Endothelial cell of umbilical vein (primary cell): ENCODE measurements at regions of chr4 and their contacts with region 1.

Region 1: DNA sequence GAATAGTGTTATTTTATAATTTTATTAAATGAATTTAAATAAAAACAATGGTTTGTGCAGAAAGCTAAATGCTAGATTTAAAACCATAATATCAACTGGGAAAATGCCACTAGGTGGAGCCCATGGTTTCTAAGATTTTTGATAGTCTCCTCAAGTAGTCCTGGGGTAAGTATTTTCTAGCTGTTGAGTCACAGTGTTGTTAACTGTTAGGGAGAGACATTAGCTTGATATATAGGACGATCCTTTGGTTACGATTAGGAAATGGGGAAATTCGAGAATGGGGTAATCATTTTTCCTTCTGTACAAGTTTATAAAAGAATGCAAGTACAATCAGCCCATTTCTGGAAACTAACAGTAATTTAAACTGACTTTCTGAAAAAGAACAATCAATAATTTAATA is 378.4 kb downstream of the ANKRD50 start:
- DNase-seq: peak; percentile 88
- H3K4me3 ChIP-seq: no peak overlapping the region
- H3K27ac ChIP-seq: peak overlapping the region; percentile 75
- H3K4me1 ChIP-seq: peaks cover 7% of the 10 kb centered on the region
- H3K27me3 ChIP-seq: no peaks in the 10 kb centered on the region
- CTCF ChIP-seq: peak; percentile 30 to 45
- POLR2A ChIP-seq: no peak

Region 2: GRCh38 chr4:124322234-124323065 is 11.7 kb before region 1 on chr4:
- CTCF ChIA-PET with region 1: interaction called, 17 read pairs
- POLR2A ChIA-PET with region 1: interaction called, 3 read pairs
- dilution Hi-C with region 1: no loop called
- intact Hi-C with region 1: no loop called
- DNase-seq: peak; percentile 56
- H3K4me3 ChIP-seq: no peak overlapping the region
- H3K27ac ChIP-seq: no peak overlapping the region
- H3K4me1 ChIP-seq: no peaks in the 10 kb centered on the region
- H3K27me3 ChIP-seq: no peaks in the 10 kb centered on the region
- CTCF ChIP-seq: peak; percentile 14 to 25
- POLR2A ChIP-seq: no peak

Region 3: DNA sequence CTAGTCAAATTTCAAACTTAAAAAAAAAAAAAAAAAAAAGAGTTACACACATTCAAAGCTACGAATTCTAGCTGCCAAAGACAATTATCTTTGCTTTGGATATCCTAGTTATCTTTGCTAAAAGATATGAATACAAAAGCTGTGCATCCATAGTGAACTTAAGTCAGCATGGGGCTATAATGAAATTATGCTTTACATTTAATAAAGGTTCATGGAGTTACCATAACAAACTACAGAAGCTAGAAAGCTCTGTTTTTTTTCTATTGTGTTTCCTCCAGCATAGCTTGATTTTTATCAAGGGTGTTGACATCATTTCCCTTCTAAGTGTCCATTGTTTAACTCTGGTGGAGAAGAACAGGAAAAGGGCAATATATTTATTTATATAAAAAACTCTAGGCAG is 144.4 kb after region 1 on chr4:
- CTCF ChIA-PET with region 1: interaction called, 15 read pairs
- POLR2A ChIA-PET with region 1: no interaction called
- dilution Hi-C with region 1: no loop called
- intact Hi-C with region 1: no loop called
- DNase-seq: peak; percentile 89
- H3K4me3 ChIP-seq: no peak overlapping the region
- H3K27ac ChIP-seq: peak overlapping the region; percentile 87
- H3K4me1 ChIP-seq: peaks cover 30% of the 10 kb centered on the region
- H3K27me3 ChIP-seq: no peaks in the 10 kb centered on the region
- CTCF ChIP-seq: no peak
- POLR2A ChIP-seq: no peak

Region 4: DNA sequence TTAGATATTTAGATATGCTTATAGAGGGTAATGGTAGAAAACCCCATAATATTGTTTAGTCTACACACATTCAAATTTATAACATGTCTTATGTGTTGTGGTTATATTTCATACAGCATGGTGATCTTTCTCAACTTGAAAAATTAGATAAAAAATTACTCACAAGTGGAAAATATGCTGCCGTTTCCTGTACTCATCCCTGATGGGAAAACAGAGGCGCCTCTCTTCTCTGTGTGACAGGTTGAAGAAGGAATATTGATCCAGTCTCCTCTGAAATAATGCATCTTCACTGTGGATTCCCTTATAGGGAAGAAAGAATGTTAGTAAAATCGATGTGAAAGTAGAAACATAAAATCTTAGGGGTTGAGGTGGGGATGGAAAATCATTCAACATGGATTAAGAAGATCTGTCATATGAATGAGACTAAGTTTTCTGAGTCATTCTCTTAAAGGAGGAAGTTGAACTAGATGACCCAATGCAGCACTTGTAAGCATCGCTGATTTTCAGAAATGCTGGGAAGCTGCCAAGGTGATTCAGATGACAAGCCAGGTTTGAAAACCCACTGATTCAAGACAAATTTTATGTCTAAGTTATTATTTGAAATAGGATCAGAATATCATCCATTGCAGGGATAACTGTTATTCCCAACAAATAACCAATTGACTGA is 307.7 kb after region 1 on chr4:
- CTCF ChIA-PET with region 1: interaction called, 7 read pairs
- POLR2A ChIA-PET with region 1: no interaction called
- dilution Hi-C with region 1: no loop called
- intact Hi-C with region 1: loop called (anchors 5 kb)
- DNase-seq: peak; percentile 86
- H3K4me3 ChIP-seq: peak overlapping the region in 1 of 3 experiments; percentile 12
- H3K27ac ChIP-seq: peak overlapping the region; percentile 79
- H3K4me1 ChIP-seq: peaks cover 43% of the 10 kb centered on the region
- H3K27me3 ChIP-seq: no peaks in the 10 kb centered on the region
- CTCF ChIP-seq: no peak
- POLR2A ChIP-seq: no peak

Region 5: GRCh38 chr4:124712372-124713184 is 378.5 kb after region 1 on chr4 and contains the start of gene ANKRD50:
- CTCF ChIA-PET with region 1: interaction called, 47 read pairs
- POLR2A ChIA-PET with region 1: interaction called, 8 read pairs
- dilution Hi-C with region 1: no loop called
- intact Hi-C with region 1: loop called (anchors 1 kb)
- DNase-seq: peak; percentile 96
- H3K4me3 ChIP-seq: peak within 1 kb of the TSS; percentile 62 to 97 (median 78)
- H3K27ac ChIP-seq: peak within 1 kb of the TSS; percentile 98
- H3K4me1 ChIP-seq: peaks cover 25% of the 10 kb centered on the region
- H3K27me3 ChIP-seq: no peaks in the 10 kb centered on the region
- CTCF ChIP-seq: no peak
- POLR2A ChIP-seq: peak; percentile 68
- total RNA-seq, gene ANKRD50: 63.6 and 68.9 TPM in 2 replicates

Region 6: GRCh38 chr4:125283707-125284279 is 949.7 kb after region 1 on chr4:
- CTCF ChIA-PET with region 1: interaction called, 72 read pairs
- POLR2A ChIA-PET with region 1: no interaction called
- dilution Hi-C with region 1: no loop called
- intact Hi-C with region 1: loop called (anchors 1 kb)
- DNase-seq: peak; percentile 54
- H3K4me3 ChIP-seq: no peak overlapping the region
- H3K27ac ChIP-seq: no peak overlapping the region
- H3K4me1 ChIP-seq: peaks cover 4% of the 10 kb centered on the region
- H3K27me3 ChIP-seq: no peaks in the 10 kb centered on the region
- CTCF ChIP-seq: peak; percentile 8 to 26
- POLR2A ChIP-seq: no peak